ENCODE measurements at regions of chr10 and their contacts with region 1.

Region 1: GRCh38 chr10:119445311-119445934 is 97.1 kb downstream of the RGS10 start:
- DNase-seq: peak; percentile 87
- ATAC-seq: peak; percentile 68

Region 2: GRCh38 chr10:119201233-119201632 is 244.2 kb before region 1 on chr10:
- intact Hi-C with region 1: loop called (anchors 2 kb)
- DNase-seq: no peak
- ATAC-seq: no peak

Region 3: GRCh38 chr10:119526621-119527592 is 81.5 kb after region 1 on chr10:
- intact Hi-C with region 1: no loop called
- DNase-seq: no peak
- ATAC-seq: no peak

Region 4: GRCh38 chr10:119567978-119568377 is 122.6 kb after region 1 on chr10:
- intact Hi-C with region 1: no loop called
- DNase-seq: no peak
- ATAC-seq: no peak